HEK293 (cell line): ENCODE measurements at regions of chr4 and their contacts with region 1.

Region 1: GRCh38 chr4:153204247-153205027 is at the start of gene TRIM2:
- H3K4me3 ChIP-seq: peak within 1 kb of the TSS; percentile 31
- H3K27ac ChIP-seq: peak within 1 kb of the TSS; percentile 88
- H3K4me1 ChIP-seq: peaks cover 6% of the 10 kb centered on the region; the same call in 1 of the 2 replicates
- CTCF ChIP-seq: no peak

Region 2: DNA sequence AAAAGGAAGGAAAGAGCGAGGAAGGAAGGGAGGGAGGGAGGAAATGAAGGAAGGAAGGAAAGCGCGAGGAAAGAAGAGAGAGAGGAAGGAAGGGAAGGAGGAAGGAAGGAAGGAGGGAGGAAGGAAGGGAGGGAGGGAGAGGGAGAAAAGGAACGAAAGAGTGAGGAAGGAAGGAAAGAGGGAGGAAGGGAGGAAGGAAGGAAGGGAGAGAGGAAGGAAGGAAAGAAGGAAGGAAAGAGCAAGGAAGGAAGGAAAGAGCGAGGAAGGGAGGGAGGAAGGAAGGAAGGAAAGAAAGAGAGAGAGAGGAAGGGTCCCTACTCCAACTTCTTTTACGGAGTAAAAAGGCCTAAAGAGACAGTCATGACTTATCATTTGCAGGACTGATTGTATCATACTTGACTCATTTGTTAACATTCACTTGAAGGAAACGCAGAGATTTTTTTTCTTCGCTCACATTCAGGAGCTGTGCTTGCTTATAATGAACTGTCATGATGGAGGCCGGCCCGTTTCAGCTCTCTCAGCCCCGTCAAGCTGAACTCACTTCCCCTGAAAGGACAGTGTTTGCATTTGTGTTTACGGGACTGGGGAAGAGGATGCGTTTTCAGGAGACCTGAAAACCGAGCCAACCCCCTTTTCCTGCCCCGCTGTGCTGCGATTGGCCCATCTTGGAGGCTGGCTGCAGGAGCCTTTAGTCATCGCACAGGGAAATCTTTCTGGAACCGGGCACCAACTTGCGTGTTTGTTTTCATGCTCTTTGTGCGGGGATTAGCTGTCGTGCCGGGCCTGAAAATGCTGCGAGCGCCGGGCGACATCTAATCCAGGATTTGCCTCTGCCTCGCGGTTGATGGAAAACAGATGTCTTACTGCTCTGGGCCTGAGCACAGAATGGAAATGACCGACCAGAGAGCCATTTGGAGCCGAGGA is 17.6 kb after region 1 on chr4:
- CTCF ChIA-PET with region 1: no interaction called
- POLR2A ChIA-PET with region 1: interaction called, 12 read pairs
- H3K4me3 ChIP-seq: peak overlapping the region; percentile 61
- H3K27ac ChIP-seq: peak overlapping the region; percentile 95
- H3K4me1 ChIP-seq: peaks cover 29% of the 10 kb centered on the region
- CTCF ChIP-seq: no peak